Mammary epithelial cell (primary cell): ENCODE measurements at regions of chr13 and their contacts with region 1.

Region 1: DNA sequence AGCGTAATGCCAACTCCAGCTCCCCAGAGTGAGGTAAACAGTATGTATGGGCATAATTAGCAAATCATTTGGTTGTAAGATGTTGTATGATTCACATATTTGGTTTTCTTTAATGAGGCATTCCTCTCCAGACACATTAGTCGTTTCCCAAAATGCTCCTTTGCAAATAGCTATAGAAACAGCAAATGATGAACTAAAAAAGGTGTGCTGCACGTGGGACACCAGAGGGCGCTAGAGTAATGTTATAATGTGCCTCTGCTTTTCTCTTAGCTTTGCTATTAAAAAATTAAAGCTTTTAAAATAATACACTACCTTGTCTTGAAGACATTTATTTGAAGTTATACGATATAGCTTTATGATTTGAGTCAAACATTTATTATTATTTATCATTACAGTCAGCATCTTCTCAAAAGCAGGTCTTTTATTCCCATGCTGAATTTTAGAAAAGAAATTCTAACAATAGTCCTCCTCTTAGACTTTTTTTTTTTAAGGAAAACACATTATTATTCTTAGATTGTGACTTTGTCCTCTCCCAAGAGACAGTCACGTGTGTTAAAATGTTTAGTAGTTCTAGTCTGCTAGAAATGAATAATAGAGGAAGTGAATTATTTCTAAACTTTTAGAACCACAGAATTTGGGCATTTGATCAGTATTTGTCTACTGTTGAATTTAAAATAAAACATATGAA is 121.6 kb upstream of the FRY start:
- DNase-seq: peak; percentile 37
- H3K4me3 ChIP-seq: no peak overlapping the region
- H3K27ac ChIP-seq: no peak overlapping the region
- H3K4me1 ChIP-seq: no peaks in the 10 kb centered on the region
- H3K27me3 ChIP-seq: no peaks in the 10 kb centered on the region
- CTCF ChIP-seq: peak; percentile 81 to 85

Region 2: GRCh38 chr13:31996592-31996991 is 86.6 kb after region 1 on chr13:
- CTCF ChIA-PET with region 1: no interaction called
- dilution Hi-C with region 1: no loop called
- in situ Hi-C with region 1: loop called in 1 of 2 experiments (anchors 25 kb)
- intact Hi-C with region 1: loop called (anchors 2 kb)
- DNase-seq: no peak
- H3K4me3 ChIP-seq: no peak overlapping the region
- H3K27ac ChIP-seq: no peak overlapping the region
- H3K4me1 ChIP-seq: no peaks in the 10 kb centered on the region
- H3K27me3 ChIP-seq: no peaks in the 10 kb centered on the region
- CTCF ChIP-seq: no peak

Region 3: DNA sequence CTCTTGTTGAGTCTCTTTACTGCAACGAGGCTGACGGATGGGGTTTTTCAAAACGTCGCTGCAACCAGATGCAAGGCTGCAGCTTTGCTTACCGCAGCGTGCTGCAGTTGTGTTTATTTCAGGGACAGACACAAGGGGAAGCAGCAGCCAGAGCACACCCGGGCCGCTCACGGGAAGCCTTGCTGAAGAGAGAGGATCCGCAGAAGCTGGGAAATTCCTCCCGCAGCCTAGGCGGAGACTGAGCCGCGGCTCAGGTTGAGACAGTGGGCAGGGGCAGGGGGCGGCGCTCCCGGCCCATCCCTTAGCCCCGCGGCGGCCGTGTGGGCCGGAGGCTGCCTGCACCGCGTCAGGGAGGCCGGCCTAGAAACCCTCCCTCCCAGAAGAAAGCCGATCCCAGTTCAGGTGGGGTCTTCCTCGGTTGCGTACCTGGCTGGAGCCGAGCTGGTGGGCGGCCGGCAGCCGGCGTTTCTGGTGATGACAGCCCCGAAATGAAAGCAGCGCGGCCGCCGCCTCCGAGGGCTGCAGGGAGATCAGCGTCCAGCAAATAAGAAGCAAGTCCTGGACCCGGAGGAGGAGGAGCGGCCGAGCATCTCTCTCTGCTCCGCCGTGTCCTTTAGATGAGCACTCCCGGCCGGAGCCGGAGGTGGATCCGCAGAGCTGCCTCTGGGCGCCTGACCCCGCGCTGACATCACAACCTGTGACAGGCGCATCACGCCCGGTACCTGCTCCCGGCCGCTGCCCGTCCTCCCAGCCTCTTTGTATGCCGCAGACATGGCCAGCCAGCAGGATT is 121.2 kb after region 1 on chr13 and contains the start of gene FRY:
- CTCF ChIA-PET with region 1: no interaction called
- dilution Hi-C with region 1: no loop called
- in situ Hi-C with region 1: no loop called
- intact Hi-C with region 1: loop called (anchors 5 kb)
- DNase-seq: peak; percentile 70
- H3K4me3 ChIP-seq: peak within 1 kb of the TSS; percentile 61 to 68 (median 63)
- H3K27ac ChIP-seq: no peak within 1 kb of the TSS
- H3K4me1 ChIP-seq: peaks cover 9% of the 10 kb centered on the region
- H3K27me3 ChIP-seq: no peaks in the 10 kb centered on the region
- CTCF ChIP-seq: peak in 1 of 2 donors; percentile 16
- total RNA-seq, gene FRY: 5.8 to 23.0 TPM

Region 4: GRCh38 chr13:32267836-32268439 is 357.9 kb after region 1 on chr13:
- CTCF ChIA-PET with region 1: no interaction called
- dilution Hi-C with region 1: no loop called
- in situ Hi-C with region 1: no loop called
- intact Hi-C with region 1: loop called (anchors 5 kb)
- DNase-seq: peak; percentile 58
- H3K4me3 ChIP-seq: no peak overlapping the region
- H3K27ac ChIP-seq: no peak overlapping the region
- H3K4me1 ChIP-seq: peaks cover 6% of the 10 kb centered on the region
- H3K27me3 ChIP-seq: no peaks in the 10 kb centered on the region
- CTCF ChIP-seq: peak; percentile 91 to 99

Region 5: GRCh38 chr13:32315238-32316027 is 405.4 kb after region 1 on chr13 and contains the starts of genes BRCA2 and ZAR1L:
- CTCF ChIA-PET with region 1: no interaction called
- dilution Hi-C with region 1: no loop called
- in situ Hi-C with region 1: loop called in 1 of 2 experiments (anchors 25 kb)
- intact Hi-C with region 1: loop called (anchors 1 kb)
- DNase-seq: peak; percentile 83
- H3K4me3 ChIP-seq: peak within 1 kb of the TSS; percentile 70 to 92 (median 70)
- H3K27ac ChIP-seq: peak within 1 kb of the TSS; percentile 95
- H3K4me1 ChIP-seq: peaks cover 5% of the 10 kb centered on the region
- H3K27me3 ChIP-seq: no peaks in the 10 kb centered on the region
- CTCF ChIP-seq: no peak
- total RNA-seq, gene BRCA2: 3.0 to 16.0 TPM
- total RNA-seq, gene ZAR1L: not detected